Activated naive CD4-positive, alpha-beta T cell treated with anti-CD3 and anti-CD28 coated beads for 36 hours (primary cell): ENCODE measurements at regions of chr7 and their contacts with region 1.

Region 1: DNA sequence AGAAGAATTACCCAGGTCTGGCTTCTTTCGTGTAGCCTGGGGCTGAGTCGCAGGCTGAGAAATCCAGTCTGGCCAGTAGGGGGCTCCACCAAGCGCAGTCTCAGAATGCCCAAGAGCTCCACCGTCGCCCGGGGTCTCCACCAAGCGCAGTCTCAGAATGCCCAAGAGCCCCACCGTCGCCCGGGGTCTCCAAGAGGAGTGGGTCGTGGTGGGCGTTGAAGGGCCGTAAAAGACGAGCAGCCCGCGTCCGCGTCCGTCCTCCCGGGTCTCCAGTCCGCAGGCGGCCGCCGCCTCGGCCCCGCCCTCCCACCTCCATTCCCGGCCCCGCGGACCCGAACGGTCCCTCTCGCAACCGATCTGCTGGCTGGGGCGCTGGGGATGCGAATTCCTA is 895 bp upstream of the ZYX start:
- DNase-seq: peak; percentile 93
- H3K4me3 Mint-ChIP-seq: peak overlapping the region; percentile 82
- H3K27ac Mint-ChIP-seq: peak overlapping the region; percentile 92
- H3K4me1 Mint-ChIP-seq: peaks cover 35% of the 10 kb centered on the region
- H3K27me3 Mint-ChIP-seq: no peaks in the 10 kb centered on the region

Region 2: DNA sequence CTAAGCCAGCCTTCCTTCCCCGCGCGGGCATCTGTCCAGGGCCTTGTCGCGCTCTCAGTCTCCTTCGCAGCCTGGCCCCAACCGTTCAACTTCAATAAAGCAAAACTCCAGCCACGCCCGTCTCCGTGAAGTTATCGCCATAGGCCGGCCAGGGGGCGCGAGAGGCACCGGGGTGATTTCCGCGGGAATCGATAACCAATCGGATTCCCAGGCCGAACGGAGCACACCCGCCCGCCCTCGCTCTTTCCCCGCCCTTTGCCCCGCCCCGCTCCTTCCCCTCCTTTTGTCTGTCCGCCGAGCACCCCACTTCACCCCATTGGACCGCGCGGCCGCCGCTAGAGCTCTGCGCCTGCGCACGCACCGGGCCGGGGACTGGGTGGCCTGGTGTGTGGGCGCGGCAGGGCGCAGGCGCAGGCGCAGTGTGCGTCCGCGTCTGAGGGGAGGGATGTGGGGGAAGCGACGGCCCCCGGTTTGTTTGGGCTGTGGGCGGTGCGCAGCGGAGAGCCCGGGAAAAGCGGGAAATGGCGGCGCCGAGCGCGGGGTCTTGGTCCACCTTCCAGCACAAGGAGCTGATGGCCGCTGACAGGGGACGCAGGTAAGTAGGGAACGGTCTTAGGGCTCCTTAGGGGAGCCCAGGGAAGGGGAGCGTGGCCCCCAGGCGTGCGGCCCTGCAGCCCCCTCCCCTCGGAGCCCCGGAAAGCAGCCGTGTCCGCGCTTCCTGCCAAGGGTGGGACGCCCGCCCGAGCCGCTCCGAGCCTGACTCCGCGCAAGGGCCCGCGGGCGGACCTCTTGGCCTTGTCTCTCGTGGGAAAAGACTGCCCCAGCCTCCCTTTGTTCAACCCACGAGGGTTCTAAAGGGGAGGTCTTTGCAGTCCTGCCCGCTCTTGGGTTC is 92.1 kb before region 1 on chr7 and contains the start of gene CASP2:
- CTCF ChIA-PET with region 1: interaction called, 3 read pairs
- intact Hi-C with region 1: loop called (anchors 1 kb)
- DNase-seq: peak; percentile 99
- H3K4me3 Mint-ChIP-seq: peak within 1 kb of the TSS; percentile 96
- H3K27ac Mint-ChIP-seq: peak within 1 kb of the TSS; percentile 88
- H3K4me1 Mint-ChIP-seq: peaks cover 48% of the 10 kb centered on the region
- H3K27me3 Mint-ChIP-seq: no peaks in the 10 kb centered on the region
- total RNA-seq, gene CASP2: 116 to 124 TPM

Region 3: DNA sequence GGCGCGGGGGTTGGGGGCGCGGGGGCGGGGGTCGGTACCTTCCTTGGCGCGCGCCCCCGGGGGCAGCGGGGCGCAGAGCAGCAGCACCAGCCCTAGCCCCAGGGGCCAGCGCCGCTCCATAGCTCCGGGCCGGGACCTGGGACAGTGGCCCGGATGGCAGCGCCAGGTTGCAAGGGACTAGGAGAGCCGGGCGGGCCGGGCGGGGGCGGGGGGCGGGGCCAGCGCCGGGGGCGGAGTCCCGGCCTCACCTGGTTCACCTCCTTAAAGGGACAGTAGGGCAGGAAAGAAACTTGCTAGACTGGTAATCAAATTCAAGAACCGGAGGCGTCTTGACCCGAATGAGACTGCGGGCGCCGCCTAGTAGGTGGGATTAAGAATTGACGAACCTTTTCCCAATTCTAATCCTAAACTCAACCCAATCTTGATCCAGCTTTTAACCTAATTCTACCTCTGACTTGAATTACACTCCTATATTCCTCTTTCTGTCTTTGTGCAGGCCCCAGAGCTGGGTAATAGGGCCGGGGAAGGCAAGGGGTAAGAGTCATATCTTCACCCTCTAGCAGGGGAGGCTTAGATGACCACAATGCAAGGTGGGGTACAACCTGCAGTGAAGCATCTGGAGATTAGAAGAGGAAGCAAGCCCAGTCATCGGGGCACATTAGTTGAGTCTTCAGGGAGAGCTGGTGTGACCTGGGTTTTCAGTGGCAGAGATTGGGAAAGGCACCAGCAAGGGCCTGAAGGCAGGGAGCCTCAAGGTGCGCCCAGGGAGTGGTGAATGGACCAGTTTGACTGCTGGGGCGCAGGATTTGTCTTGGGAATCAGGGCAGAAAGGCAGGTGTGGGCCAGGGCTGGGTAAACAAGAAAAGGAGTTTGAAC is 28.7 kb after region 1 on chr7 and contains the start of gene EPHA1:
- CTCF ChIA-PET with region 1: interaction called, 73 read pairs
- intact Hi-C with region 1: loop called (anchors 1 kb)
- DNase-seq: peak; percentile 56
- H3K4me3 Mint-ChIP-seq: peak within 1 kb of the TSS; percentile 70
- H3K27ac Mint-ChIP-seq: peak within 1 kb of the TSS; percentile 42
- H3K4me1 Mint-ChIP-seq: peaks cover 75% of the 10 kb centered on the region
- H3K27me3 Mint-ChIP-seq: no peaks in the 10 kb centered on the region
- total RNA-seq, gene EPHA1: 1.0 to 1.3 TPM

Region 4: DNA sequence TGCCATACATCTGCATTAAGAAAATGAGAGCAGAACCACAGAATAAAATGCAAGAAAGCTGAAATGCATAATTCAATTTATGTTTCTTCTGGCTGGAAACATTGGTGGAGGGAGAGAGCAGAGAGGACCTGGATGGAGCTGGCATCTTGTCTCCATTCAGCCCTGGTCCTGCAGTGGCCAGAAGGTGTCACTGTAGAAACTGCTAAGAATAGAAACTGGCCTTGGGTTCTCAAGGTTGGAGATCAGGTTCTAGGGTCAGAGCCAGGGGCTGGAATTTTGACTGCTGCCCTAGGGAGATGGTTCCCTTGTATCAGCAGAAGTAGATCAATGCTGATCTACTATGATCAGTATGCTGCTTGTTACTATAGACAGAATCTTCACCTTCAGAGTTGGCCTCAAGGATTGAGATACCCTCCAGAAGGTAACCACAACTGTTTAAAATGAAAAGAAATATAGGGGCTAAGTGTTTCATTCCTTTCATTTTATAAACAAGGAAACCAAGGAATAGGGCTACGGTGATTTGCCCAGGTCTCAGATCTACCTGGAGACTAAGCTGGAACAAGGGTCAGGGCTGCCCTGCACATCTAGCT is 110.6 kb after region 1 on chr7:
- CTCF ChIA-PET with region 1: no interaction called
- intact Hi-C with region 1: loop called (anchors 2 kb)
- DNase-seq: peak; percentile 36
- H3K4me3 Mint-ChIP-seq: no peak overlapping the region
- H3K27ac Mint-ChIP-seq: no peak overlapping the region
- H3K4me1 Mint-ChIP-seq: peaks cover 30% of the 10 kb centered on the region
- H3K27me3 Mint-ChIP-seq: no peaks in the 10 kb centered on the region

Region 5: GRCh38 chr7:144437370-144438191 is 1057.3 kb after region 1 on chr7:
- CTCF ChIA-PET with region 1: no interaction called
- intact Hi-C with region 1: no loop called
- DNase-seq: peak; percentile 83
- H3K4me3 Mint-ChIP-seq: no peak overlapping the region
- H3K27ac Mint-ChIP-seq: no peak overlapping the region
- H3K4me1 Mint-ChIP-seq: no peaks in the 10 kb centered on the region
- H3K27me3 Mint-ChIP-seq: no peaks in the 10 kb centered on the region